B cell (primary cell): ENCODE measurements at regions of chr3 and their contacts with region 1.

Region 1: DNA sequence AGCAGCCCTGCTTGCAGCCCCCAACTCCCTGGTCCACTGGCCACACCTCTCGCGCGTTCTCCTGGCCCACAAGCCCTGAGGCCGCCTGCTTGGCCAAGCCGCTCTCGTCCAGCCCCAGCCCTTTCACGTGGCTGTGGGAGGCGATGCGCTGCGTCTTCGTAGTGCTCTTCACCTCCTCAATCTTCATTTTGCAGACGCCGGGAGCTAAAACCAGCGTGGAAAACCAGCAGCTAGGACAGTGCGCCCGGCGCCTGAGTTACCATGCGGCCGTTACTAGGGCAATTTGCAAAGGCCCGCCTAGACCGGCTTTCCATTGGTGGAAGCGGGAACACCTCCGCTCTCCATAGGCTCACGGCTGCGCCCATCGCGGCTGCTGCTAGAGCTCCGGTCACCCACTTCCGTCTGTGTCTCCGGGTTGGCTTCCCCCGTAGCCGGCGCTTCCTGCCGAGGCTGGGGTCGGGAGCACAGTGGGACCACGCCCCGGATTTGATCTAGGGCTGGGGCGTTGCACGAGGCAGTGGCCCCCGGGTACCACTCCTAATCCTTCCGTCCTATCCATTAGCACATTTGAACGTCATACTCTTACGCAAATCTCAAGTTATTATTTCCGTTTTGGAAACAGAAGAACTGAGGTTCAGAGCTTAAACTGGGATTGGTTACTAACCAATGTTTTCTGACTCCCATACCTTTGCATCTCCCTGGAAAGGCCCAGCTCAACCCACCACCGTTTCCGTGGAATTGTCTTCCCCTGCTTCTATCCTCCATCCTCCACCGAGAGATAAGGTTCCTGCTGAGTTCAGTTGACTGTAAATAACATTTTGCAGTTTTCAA is at the start of gene RUVBL1:
- DNase-seq: peak; percentile 97
- ATAC-seq: peak; percentile 97
- H3K4me3 ChIP-seq: peak within 1 kb of the TSS; percentile 68 to 94 (median 85)
- H3K4me3 Mint-ChIP-seq: peak within 1 kb of the TSS; percentile 98
- H3K27ac ChIP-seq: peak within 1 kb of the TSS; percentile 79 to 84
- H3K27ac Mint-ChIP-seq: peak within 1 kb of the TSS; percentile 86
- H3K4me1 ChIP-seq: peaks cover 15 to 20% of the 10 kb centered on the region in 2 donors
- H3K4me1 Mint-ChIP-seq: peaks cover 22% of the 10 kb centered on the region
- H3K27me3 ChIP-seq: no peaks in the 10 kb centered on the region
- H3K27me3 Mint-ChIP-seq: no peaks in the 10 kb centered on the region
- CTCF ChIP-seq: no peak
- total RNA-seq, gene RUVBL1: 19.9 and 20.4 TPM in 2 replicates

Region 2: DNA sequence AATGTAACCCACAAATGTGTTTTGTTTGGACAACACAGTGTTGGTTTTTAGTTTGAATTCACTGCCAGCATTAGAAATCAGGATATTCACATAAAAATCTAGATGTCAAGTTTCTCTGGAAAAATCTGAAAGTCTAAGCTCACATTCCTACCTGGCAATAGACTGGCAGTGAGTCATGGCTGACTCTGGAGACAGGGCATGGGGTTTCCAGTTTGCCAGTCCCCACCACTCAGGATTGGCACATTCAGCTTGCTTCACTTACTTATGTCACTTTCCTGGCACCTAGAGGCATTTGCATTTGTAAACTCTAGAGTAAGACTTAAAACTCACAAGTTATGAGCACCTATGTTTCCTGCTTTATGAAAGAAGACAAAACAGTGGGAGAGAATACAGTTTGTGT is 90.7 kb before region 1 on chr3:
- CTCF ChIA-PET with region 1: no interaction called
- POLR2A ChIA-PET with region 1: no interaction called
- intact Hi-C with region 1: no loop called
- DNase-seq: no peak
- ATAC-seq: no peak
- H3K4me3 ChIP-seq: no peak overlapping the region
- H3K4me3 Mint-ChIP-seq: no peak overlapping the region
- H3K27ac ChIP-seq: no peak overlapping the region
- H3K27ac Mint-ChIP-seq: no peak overlapping the region
- H3K4me1 ChIP-seq: no peaks in the 10 kb centered on the region
- H3K4me1 Mint-ChIP-seq: no peaks in the 10 kb centered on the region
- H3K27me3 ChIP-seq: peaks cover 0 to 10% (median 3%) of the 10 kb centered on the region in 4 experiments
- H3K27me3 Mint-ChIP-seq: peaks cover 17% of the 10 kb centered on the region
- CTCF ChIP-seq: no peak

Region 3: GRCh38 chr3:128153156-128154041 is 29.6 kb after region 1 on chr3 and contains the start of gene EEFSEC:
- CTCF ChIA-PET with region 1: interaction called, 18 read pairs
- POLR2A ChIA-PET with region 1: interaction called, 28 read pairs
- intact Hi-C with region 1: no loop called
- DNase-seq: peak; percentile 91
- ATAC-seq: peak; percentile 90
- H3K4me3 ChIP-seq: peak within 1 kb of the TSS; percentile 54 to 91 (median 74)
- H3K4me3 Mint-ChIP-seq: peak within 1 kb of the TSS; percentile 94
- H3K27ac ChIP-seq: peak within 1 kb of the TSS; percentile 70 to 80
- H3K27ac Mint-ChIP-seq: peak within 1 kb of the TSS; percentile 95
- H3K4me1 ChIP-seq: peaks cover 11 to 14% of the 10 kb centered on the region in 2 donors
- H3K4me1 Mint-ChIP-seq: peaks cover 24% of the 10 kb centered on the region
- H3K27me3 ChIP-seq: no peaks in the 10 kb centered on the region
- H3K27me3 Mint-ChIP-seq: no peaks in the 10 kb centered on the region
- CTCF ChIP-seq: no peak
- total RNA-seq, gene EEFSEC: 17.2 and 17.9 TPM in 2 replicates

Region 4: GRCh38 chr3:128665362-128666038 is 541.7 kb after region 1 on chr3:
- CTCF ChIA-PET with region 1: no interaction called
- POLR2A ChIA-PET with region 1: interaction called, 13 read pairs
- intact Hi-C with region 1: no loop called
- DNase-seq: no peak
- ATAC-seq: no peak
- H3K4me3 ChIP-seq: no peak overlapping the region
- H3K4me3 Mint-ChIP-seq: no peak overlapping the region
- H3K27ac ChIP-seq: no peak overlapping the region
- H3K27ac Mint-ChIP-seq: no peak overlapping the region
- H3K4me1 ChIP-seq: no peaks in the 10 kb centered on the region
- H3K4me1 Mint-ChIP-seq: peaks cover 2% of the 10 kb centered on the region
- H3K27me3 ChIP-seq: peaks cover 0 to 2% (median 0%) of the 10 kb centered on the region in 4 experiments
- H3K27me3 Mint-ChIP-seq: no peaks in the 10 kb centered on the region
- CTCF ChIP-seq: no peak

Region 5: GRCh38 chr3:129343643-129344332 is 1220.0 kb after region 1 on chr3:
- CTCF ChIA-PET with region 1: no interaction called
- POLR2A ChIA-PET with region 1: no interaction called
- intact Hi-C with region 1: no loop called
- DNase-seq: peak; percentile 59
- ATAC-seq: peak; percentile 68
- H3K4me3 ChIP-seq: peak overlapping the region in 3 of 5 experiments; percentile 15 to 32 (median 23)
- H3K4me3 Mint-ChIP-seq: peak overlapping the region; percentile 75
- H3K27ac ChIP-seq: no peak overlapping the region
- H3K27ac Mint-ChIP-seq: no peak overlapping the region
- H3K4me1 ChIP-seq: peaks cover 12% of the 10 kb centered on the region in 2 donors
- H3K4me1 Mint-ChIP-seq: peaks cover 7% of the 10 kb centered on the region
- H3K27me3 ChIP-seq: peaks cover 0 to 44% (median 12%) of the 10 kb centered on the region in 4 experiments
- H3K27me3 Mint-ChIP-seq: peaks cover 23% of the 10 kb centered on the region
- CTCF ChIP-seq: peak; percentile 66